ENCODE measurements at regions of chr5 and their contacts with region 1.

Region 1: DNA sequence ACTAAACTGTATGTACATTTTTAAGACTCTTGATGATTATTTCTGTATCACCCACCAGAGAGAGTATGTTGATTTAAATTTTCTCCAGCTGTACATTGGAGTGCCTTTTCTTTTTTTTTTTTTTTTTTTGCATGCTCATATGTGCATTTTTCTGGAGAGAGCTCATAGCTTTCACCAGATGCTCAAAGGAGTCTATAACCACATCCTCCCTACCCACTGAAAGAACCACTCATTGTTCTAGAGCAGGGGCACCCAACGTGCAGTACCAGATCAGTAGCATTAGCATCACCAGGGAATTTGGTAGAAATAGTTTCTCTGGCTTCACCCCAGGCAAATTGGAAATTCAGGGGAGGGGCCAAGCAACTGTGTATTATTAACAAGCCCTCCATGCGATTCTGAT is 53.9 kb upstream of the TMEM171 start:
- DNase-seq: peak; percentile 6
- H3K4me3 Mint-ChIP-seq: no peak overlapping the region
- H3K27ac Mint-ChIP-seq: no peak overlapping the region
- H3K4me1 Mint-ChIP-seq: peaks cover 2% of the 10 kb centered on the region
- H3K27me3 Mint-ChIP-seq: peaks cover 22% of the 10 kb centered on the region

Region 2: DNA sequence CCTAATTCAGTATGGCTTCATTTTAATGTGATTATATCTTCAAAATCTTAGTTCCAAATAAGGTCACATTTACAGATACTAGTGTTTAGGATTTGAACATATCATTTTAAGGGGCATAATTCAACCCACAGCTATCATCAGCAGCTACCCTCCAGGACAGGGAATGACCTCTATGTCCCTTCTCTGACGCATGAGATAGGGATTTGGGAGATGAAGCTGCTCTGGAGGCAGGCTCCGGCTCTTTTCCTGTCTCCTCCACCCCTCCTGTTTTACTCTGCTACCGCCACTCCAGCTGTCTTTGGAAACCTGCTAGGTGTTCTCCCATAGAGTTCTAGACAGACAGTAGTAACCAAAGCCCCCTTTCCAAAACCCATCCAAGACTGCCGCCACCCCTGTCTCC is 1228.2 kb before region 1 on chr5:
- CTCF ChIA-PET with region 1: interaction called, 10 read pairs
- POLR2A ChIA-PET with region 1: no interaction called
- DNase-seq: no peak
- H3K4me3 Mint-ChIP-seq: no peak overlapping the region
- H3K27ac Mint-ChIP-seq: no peak overlapping the region
- H3K4me1 Mint-ChIP-seq: no peaks in the 10 kb centered on the region
- H3K27me3 Mint-ChIP-seq: peaks cover 8% of the 10 kb centered on the region

Measured in activated CD4-positive, alpha-beta T cell treated with anti-CD3 and anti-CD28 coated beads, Interleukin-2, amount 10 ng/mL, durations not matched to agents 7 days and 5 days (primary cell).